ENCODE measurements at regions of chr3 and their contacts with region 1.

Region 1: DNA sequence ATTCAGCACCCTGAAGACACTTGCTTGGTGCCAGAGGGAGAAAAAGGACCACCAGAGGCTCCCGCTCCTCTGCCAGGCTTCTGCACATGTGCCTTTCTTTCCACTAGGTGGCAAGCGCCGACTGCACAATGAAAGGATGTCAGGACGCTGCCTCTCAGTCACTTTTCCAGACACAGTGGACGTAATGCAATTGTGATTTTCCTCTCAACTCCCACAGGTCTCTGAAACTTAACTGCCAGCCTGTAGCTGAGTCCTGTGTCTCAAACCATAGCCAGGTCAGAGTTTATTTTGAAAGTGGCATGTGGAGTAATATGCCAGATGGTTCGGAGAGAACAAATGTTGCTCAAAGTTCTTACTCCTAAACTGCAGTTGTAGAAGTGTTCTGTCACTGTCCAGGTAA is 162.9 kb downstream of the ITPR1 start:
- DNase-seq: peak; percentile 80

Region 2: GRCh38 chr3:4712143-4712542 is 56.1 kb after region 1 on chr3:
- intact Hi-C with region 1: loop called (anchors 5 kb)
- DNase-seq: no peak

Region 3: DNA sequence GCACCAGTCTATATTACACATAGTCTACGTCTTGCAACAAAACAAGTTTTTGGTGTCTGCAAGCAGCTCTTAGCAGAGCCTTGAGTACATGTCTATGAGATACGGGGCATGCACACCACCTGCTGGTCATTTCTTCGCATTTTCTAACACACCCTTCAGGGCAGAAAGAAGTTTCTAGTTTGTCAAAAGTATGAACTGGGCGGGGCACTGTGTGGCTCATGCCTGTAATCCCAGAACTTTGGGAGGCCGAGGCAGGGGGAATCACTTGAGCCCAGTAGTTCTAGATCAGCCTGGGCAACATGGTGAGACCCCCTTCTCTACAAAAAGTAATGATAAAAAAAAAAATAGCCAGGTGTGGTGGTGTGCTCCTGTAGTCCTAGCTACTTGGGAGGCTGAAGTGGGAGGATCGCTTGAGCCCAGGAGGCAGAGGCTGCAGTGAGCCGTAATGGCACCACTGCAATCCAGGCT is 401.8 kb after region 1 on chr3:
- intact Hi-C with region 1: loop called (anchors 2 kb)
- DNase-seq: peak; percentile 85

Region 4: GRCh38 chr3:5194341-5195159 is 538.5 kb after region 1 on chr3:
- intact Hi-C with region 1: loop called (anchors 10 kb)
- DNase-seq: no peak